ENCODE measurements at regions of chr3 and their contacts with region 1.

Region 1: DNA sequence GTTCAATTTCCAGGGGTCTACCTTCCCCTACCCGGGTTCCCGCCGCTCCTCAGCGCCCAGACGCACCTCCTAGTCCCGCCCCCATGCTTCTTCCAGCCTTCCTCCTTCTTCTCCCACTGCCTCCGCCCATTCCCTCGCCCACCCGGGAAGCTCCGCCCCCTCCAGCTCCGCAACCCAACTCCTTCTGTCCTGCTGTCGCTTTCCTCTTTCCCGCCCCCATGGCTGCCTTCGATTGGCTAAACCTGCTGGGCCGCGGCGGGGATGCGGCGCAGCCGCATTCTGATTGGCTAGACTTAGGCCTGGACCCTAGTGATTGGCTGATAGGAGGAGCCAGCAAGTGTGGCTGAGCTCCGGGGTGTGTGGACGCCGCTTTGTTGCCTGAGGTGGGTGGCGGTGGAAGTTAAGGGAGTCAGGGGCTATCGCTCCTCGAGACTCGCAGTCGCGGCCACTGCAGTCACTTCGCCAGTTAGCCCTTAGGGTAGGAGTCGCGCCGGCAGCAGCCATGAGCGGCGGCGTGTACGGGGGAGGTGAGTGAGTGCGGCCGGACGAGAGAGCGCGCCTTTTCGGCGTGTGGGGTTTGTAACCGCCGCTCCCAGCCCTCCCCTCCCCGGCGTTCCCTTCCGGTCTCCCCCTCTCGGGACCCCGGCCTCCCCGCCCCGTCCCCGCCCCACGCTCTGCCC is at the start of gene ACTL6A:
- DNase-seq: peak; percentile 86 to 98 (median 96)
- ATAC-seq: peak; percentile 96
- H3K4me3 ChIP-seq: peak within 1 kb of the TSS; percentile 73
- H3K4me3 Mint-ChIP-seq: peak within 1 kb of the TSS; percentile 91 to 100 (median 99)
- H3K27ac ChIP-seq: peak within 1 kb of the TSS; percentile 78
- H3K27ac Mint-ChIP-seq: peak within 1 kb of the TSS; percentile 86 to 98 (median 95)
- H3K4me1 ChIP-seq: peaks cover 10% of the 10 kb centered on the region in 2 donors
- H3K4me1 Mint-ChIP-seq: peaks cover 13 to 49% (median 33%) of the 10 kb centered on the region in 7 donors
- H3K27me3 ChIP-seq: no peaks in the 10 kb centered on the region
- H3K27me3 Mint-ChIP-seq: peaks cover 0 to 13% (median 0%) of the 10 kb centered on the region in 5 donors
- total RNA-seq, gene ACTL6A: 23.2 to 78.3 (median 49.0) TPM

Region 2: GRCh38 chr3:179015551-179016020 is 547.1 kb before region 1 on chr3:
- CTCF ChIA-PET with region 1: no interaction called
- POLR2A ChIA-PET with region 1: no interaction called
- intact Hi-C with region 1: loop called (anchors 1 kb)
- DNase-seq: peak in 8 of 9 donors; percentile 41 to 87 (median 82)
- ATAC-seq: peak; percentile 99
- H3K4me3 ChIP-seq: no peak overlapping the region
- H3K4me3 Mint-ChIP-seq: peak overlapping the region in 1 of 10 donors; percentile 35
- H3K27ac ChIP-seq: no peak overlapping the region
- H3K27ac Mint-ChIP-seq: peak overlapping the region in 5 of 9 donors; percentile 2 to 53 (median 32)
- H3K4me1 ChIP-seq: peaks cover 0 to 20% of the 10 kb centered on the region in 2 donors
- H3K4me1 Mint-ChIP-seq: peaks cover 15 to 42% (median 41%) of the 10 kb centered on the region in 7 donors
- H3K27me3 ChIP-seq: no peaks in the 10 kb centered on the region
- H3K27me3 Mint-ChIP-seq: peaks cover 0 to 19% (median 0%) of the 10 kb centered on the region in 5 donors

Region 3: DNA sequence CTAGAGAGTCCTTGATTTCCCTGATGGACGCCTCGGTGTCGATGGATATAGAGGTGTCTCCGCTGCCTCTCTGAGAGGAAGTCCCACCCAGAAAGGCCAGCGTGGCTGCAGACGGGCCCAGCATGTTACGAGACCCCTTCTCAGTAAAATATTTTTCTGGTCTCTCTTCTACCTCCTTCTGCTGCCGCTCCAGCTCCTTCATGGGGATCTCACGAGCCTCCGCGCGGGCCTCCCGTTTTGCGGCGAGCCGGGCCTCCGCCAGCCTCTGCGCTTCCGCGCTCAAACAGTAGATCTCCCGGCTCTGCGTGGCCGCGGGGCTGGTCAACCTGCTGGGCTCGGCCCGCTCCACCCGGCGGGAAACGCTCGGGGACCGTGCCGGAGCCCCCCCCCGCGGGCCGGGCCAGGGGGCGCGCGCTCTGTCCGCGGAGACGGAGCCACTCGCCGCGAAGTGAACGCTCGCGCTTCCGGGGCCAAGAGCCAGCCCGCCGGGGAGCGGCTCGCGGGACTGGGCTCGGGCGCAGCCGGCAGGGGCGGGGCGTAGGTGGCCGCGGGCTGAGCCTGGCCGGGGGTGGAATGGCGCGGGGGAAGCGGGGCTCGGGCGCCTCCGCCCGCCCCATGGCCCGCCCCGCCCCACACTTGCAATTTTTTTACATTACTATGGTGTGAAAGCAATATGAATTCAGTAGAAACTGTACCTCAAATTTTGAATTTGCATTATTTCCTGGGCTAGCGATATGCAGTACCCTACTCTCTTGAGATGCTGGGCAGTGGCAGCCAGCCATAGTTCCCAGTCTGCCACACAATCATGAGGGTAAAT is 301.6 kb before region 1 on chr3:
- CTCF ChIA-PET with region 1: no interaction called
- POLR2A ChIA-PET with region 1: no interaction called
- intact Hi-C with region 1: loop called in 1 of 2 experiments (anchors 5 kb)
- DNase-seq: peak; percentile 34 to 73 (median 60)
- ATAC-seq: peak; percentile 96
- H3K4me3 ChIP-seq: peak overlapping the region; percentile 66
- H3K4me3 Mint-ChIP-seq: peak overlapping the region; percentile 60 to 89 (median 83)
- H3K27ac ChIP-seq: peak overlapping the region; percentile 58
- H3K27ac Mint-ChIP-seq: peak overlapping the region; percentile 11 to 78 (median 59)
- H3K4me1 ChIP-seq: peaks cover 0 to 6% of the 10 kb centered on the region in 2 donors
- H3K4me1 Mint-ChIP-seq: peaks cover 4 to 29% (median 21%) of the 10 kb centered on the region in 7 donors
- H3K27me3 ChIP-seq: no peaks in the 10 kb centered on the region
- H3K27me3 Mint-ChIP-seq: peaks cover 0 to 20% (median 0%) of the 10 kb centered on the region in 5 donors

Region 4: DNA sequence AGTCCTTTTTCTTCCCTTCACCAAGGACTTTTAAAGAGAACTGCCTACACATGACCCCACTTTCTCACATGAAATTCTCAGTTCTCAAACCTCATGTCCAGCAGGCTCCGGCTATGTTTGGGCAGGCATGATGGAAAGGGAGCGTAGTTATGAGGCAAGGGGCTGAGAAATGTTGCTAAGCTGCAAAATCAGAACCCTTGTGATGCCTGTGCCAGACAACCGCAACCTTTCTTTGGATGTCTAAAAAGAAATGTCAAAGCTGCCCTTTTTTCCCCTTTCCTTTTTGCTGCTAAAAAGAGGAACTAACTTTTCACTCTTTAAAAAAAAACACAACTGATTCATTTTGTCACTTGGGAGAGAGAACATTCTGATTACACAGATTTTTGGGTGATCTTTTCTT is 130.7 kb before region 1 on chr3:
- CTCF ChIA-PET with region 1: no interaction called
- POLR2A ChIA-PET with region 1: no interaction called
- intact Hi-C with region 1: no loop called
- DNase-seq: no peak
- ATAC-seq: peak; percentile 8
- H3K4me3 ChIP-seq: no peak overlapping the region
- H3K4me3 Mint-ChIP-seq: no peak overlapping the region
- H3K27ac ChIP-seq: no peak overlapping the region
- H3K27ac Mint-ChIP-seq: no peak overlapping the region
- H3K4me1 ChIP-seq: no peaks in the 10 kb centered on the region
- H3K4me1 Mint-ChIP-seq: peaks cover 0 to 11% (median 0%) of the 10 kb centered on the region in 7 donors
- H3K27me3 ChIP-seq: no peaks in the 10 kb centered on the region
- H3K27me3 Mint-ChIP-seq: peaks cover 0 to 29% (median 10%) of the 10 kb centered on the region in 5 donors

Region 5: DNA sequence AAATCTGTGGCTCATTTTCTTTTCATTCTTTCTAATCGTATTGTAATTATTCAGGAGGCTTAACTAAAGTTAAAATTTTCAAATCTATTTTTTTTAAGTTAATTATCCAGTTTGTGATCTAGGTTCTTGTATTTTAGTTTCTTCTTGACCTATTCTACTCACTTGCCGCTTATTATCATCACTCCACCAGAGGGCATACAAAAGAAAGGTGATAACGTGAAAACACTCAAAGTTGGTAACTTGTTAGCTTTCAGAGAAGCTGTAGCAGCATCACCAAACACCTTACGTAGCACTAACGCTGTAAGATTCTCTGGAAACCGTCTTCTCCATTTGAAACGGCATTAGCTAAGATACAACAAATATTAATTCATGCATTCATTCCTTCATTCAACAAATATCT is 116.2 kb before region 1 on chr3:
- CTCF ChIA-PET with region 1: no interaction called
- POLR2A ChIA-PET with region 1: no interaction called
- intact Hi-C with region 1: loop called (anchors 1 to 5 kb)
- DNase-seq: no peak
- ATAC-seq: no peak
- H3K4me3 ChIP-seq: no peak overlapping the region
- H3K4me3 Mint-ChIP-seq: no peak overlapping the region
- H3K27ac ChIP-seq: no peak overlapping the region
- H3K27ac Mint-ChIP-seq: no peak overlapping the region
- H3K4me1 ChIP-seq: peaks cover 0 to 10% of the 10 kb centered on the region in 2 donors
- H3K4me1 Mint-ChIP-seq: peaks cover 8 to 23% (median 15%) of the 10 kb centered on the region in 7 donors
- H3K27me3 ChIP-seq: peaks cover 0 to 7% of the 10 kb centered on the region in 2 donors
- H3K27me3 Mint-ChIP-seq: peaks cover 35 to 68% (median 56%) of the 10 kb centered on the region in 5 donors

Region 6: DNA sequence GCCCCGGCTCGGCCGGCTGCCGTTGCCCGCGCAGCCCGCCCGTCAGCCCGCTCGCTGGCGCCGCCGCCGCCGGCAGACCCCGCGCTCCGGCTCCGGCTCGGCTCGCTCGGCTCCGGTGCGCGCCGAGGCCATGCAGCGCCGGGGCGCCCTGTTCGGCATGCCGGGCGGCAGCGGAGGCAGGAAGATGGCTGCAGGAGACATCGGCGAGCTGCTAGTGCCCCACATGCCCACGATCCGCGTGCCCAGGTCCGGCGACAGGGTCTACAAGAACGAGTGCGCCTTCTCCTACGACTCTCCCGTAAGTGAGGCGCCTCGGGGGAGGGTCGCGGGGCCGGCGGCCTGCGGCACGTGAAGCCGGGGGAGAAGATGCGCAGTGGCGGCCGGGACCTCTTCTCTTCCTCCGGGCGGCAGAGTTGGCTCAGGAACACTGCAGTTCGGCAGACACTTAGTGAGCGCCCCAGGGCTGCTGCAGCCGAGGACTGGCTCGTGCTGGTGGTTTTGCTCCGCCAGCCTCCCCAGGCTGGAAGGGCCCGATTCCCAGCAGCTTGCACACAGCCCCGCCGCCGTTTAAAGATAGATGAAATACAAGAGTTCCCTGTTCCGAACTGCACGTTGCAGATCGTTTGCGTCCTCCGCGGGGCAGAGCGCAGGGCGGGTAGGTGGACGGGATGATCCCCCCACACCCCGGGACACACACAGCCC is 90.5 kb after region 1 on chr3:
- CTCF ChIA-PET with region 1: interaction called, 3 read pairs
- POLR2A ChIA-PET with region 1: interaction called, 4 read pairs
- intact Hi-C with region 1: loop called (anchors 1 kb)
- DNase-seq: peak; percentile 46 to 74 (median 71)
- ATAC-seq: peak; percentile 71
- H3K4me3 ChIP-seq: peak overlapping the region; percentile 83
- H3K4me3 Mint-ChIP-seq: peak overlapping the region; percentile 87 to 98 (median 94)
- H3K27ac ChIP-seq: peak overlapping the region; percentile 74
- H3K27ac Mint-ChIP-seq: peak overlapping the region; percentile 84 to 90 (median 87)
- H3K4me1 ChIP-seq: peaks cover 0 to 7% of the 10 kb centered on the region in 2 donors
- H3K4me1 Mint-ChIP-seq: peaks cover 20 to 55% (median 41%) of the 10 kb centered on the region in 7 donors
- H3K27me3 ChIP-seq: no peaks in the 10 kb centered on the region
- H3K27me3 Mint-ChIP-seq: peaks cover 0 to 19% (median 0%) of the 10 kb centered on the region in 5 donors

Region 7: DNA sequence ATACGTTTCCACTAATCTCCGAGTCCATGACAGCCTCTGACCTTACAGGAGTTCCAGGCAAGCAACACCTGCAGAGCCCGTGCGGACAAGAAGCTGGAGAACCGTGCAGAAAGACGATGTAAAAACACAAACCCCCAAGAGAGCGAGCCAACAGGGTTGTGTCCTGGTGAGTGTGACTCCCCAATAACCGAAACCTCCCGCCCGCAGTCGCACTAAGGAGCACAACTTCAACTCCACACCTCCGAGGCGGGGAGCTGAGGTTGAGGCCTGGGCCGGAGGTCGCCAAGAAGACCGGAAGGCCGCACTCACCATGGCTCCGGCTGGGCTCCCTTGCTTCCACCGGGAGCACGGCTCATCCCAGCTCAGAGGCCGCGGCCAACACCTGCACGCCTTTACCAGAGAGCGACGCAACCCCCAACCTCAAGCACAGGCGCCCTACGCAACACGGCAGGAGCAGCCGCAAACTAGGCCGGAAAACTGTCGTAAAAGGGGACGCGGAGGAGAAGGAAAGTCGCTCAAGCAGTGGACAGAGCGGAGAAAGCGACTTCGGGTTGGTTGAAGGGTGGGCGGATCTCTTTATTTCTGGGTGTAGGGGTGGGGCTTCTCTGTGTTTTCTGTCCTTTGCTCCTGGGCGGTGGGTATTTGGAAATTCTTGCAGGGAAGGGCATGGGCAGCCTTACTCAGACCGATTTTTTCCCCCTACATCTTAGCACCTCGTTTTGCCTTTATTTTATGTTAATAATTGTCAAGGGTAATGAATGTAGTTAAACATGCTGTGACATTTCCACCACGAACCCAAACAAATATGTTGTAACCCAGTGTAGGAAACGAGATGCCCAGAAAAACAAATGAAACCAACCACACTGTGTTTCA is 1426.8 kb after region 1 on chr3 and contains the start of gene DNAJC19:
- CTCF ChIA-PET with region 1: no interaction called
- POLR2A ChIA-PET with region 1: no interaction called
- intact Hi-C with region 1: loop called (anchors 10 kb)
- DNase-seq: peak; percentile 69 to 94 (median 93)
- ATAC-seq: peak; percentile 99
- H3K4me3 ChIP-seq: peak within 1 kb of the TSS; percentile 78
- H3K4me3 Mint-ChIP-seq: peak within 1 kb of the TSS; percentile 91 to 99 (median 97)
- H3K27ac ChIP-seq: peak within 1 kb of the TSS; percentile 80
- H3K27ac Mint-ChIP-seq: peak within 1 kb of the TSS; percentile 90 to 99 (median 96)
- H3K4me1 ChIP-seq: peaks cover 15 to 23% of the 10 kb centered on the region in 2 donors
- H3K4me1 Mint-ChIP-seq: peaks cover 15 to 58% (median 44%) of the 10 kb centered on the region in 7 donors
- H3K27me3 ChIP-seq: no peaks in the 10 kb centered on the region
- H3K27me3 Mint-ChIP-seq: peaks cover 0 to 7% (median 0%) of the 10 kb centered on the region in 5 donors
- total RNA-seq, gene DNAJC19: 20.7 to 74.1 (median 40.2) TPM